ENCODE measurements at regions of chr13 and their contacts with region 1.

Region 1: DNA sequence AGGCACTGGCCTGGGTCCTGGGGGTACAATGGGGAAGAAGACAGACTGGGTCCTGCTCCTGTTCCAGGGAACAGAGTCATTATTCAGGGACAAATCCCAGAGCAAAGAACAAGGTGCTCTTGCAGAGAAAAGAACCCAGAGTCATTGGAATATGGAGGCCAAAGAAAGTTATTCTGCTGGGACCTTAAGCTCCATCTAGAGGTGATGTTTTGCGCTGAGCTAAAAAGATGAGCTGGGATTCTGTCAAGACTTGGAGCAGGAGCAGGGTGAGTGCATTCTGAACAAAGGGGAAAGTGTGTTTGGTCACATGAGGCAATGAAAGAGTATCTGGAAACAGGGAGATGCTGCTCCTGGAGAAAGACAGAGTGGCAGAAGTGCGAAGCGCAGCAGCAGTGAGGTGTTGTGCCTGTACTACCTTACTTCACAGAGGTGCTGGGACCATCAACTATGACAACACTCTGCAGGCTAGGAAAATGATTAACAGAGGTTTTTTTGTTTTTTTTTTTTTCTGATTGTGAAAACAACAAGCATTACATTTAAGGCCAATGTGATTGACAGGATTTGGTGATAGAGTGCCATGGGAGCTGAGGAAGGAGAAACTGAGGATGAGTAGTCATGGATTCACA is 95.3 kb upstream of the TNFSF11 start:
- DNase-seq: peak; percentile 24
- H3K4me3 ChIP-seq: no peak overlapping the region
- H3K27ac ChIP-seq: no peak overlapping the region
- H3K4me1 ChIP-seq: no peaks in the 10 kb centered on the region
- H3K27me3 ChIP-seq: no peaks in the 10 kb centered on the region
- CTCF ChIP-seq: peak; percentile 42 to 68

Region 2: GRCh38 chr13:41049480-41050440 is 1428.9 kb before region 1 on chr13:
- CTCF ChIA-PET with region 1: no interaction called
- dilution Hi-C with region 1: no loop called
- in situ Hi-C with region 1: no loop called
- intact Hi-C with region 1: no loop called
- DNase-seq: no peak
- H3K4me3 ChIP-seq: no peak overlapping the region
- H3K27ac ChIP-seq: no peak overlapping the region
- H3K4me1 ChIP-seq: peaks cover 7% of the 10 kb centered on the region
- H3K27me3 ChIP-seq: no peaks in the 10 kb centered on the region
- CTCF ChIP-seq: no peak

Region 3: DNA sequence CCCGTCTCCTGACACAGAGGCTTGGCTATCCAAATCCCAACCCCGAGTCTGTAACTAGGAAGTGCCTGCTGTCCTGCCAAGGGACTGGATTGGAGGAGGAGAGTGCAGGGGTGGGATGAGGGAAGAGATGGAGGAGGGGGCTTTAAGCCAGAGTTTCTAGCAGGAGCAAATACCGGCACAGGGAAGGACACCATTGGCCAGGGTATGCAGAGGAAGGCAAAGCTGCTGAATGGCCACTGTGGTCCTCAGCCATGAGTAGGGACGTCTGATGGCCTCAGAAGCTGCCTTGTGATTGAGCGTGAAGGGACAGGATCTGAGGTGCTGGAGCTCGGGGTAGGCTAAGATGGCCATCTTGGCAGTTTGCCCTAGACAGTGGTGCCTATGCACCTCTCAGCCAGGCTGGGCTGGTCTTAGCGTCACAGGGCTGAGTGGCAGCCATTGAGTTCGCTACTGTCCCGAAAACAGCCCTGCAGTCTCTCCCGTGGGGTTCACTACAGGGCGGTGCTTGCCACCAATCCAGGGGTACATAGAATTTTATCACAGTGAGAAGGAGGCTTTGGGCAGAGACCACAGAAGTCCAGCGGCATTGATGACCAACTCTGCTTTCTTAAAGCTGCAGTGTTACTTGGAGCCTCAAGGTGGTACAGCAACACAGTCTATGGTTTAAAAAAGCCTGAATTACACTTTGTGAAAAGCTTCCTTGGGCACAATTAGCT is 144.9 kb before region 1 on chr13:
- CTCF ChIA-PET with region 1: interaction called, 17 read pairs
- dilution Hi-C with region 1: no loop called
- in situ Hi-C with region 1: loop called in 1 of 2 experiments (anchors 10 kb)
- intact Hi-C with region 1: loop called (anchors 1 kb)
- DNase-seq: peak; percentile 17
- H3K4me3 ChIP-seq: no peak overlapping the region
- H3K27ac ChIP-seq: no peak overlapping the region
- H3K4me1 ChIP-seq: no peaks in the 10 kb centered on the region
- H3K27me3 ChIP-seq: peaks cover 2% of the 10 kb centered on the region
- CTCF ChIP-seq: peak; percentile 44 to 60